ENCODE measurements at regions of chrX and their contacts with region 1.

Region 1: GRCh38 chrX:72245461-72246089 is 6.7 kb upstream of the ERCC6L start:
- H3K4me3 ChIP-seq: no peak overlapping the region
- H3K27ac ChIP-seq: no peak overlapping the region
- H3K4me1 ChIP-seq: peaks cover 5% of the 10 kb centered on the region
- CTCF ChIP-seq: peak; percentile 75

Region 2: GRCh38 chrX:72169008-72169728 is 76.4 kb before region 1 on chrX:
- CTCF ChIA-PET with region 1: no interaction called
- POLR2A ChIA-PET with region 1: no interaction called
- H3K4me3 ChIP-seq: no peak overlapping the region
- H3K27ac ChIP-seq: no peak overlapping the region
- H3K4me1 ChIP-seq: no peaks in the 10 kb centered on the region
- CTCF ChIP-seq: no peak

Region 3: DNA sequence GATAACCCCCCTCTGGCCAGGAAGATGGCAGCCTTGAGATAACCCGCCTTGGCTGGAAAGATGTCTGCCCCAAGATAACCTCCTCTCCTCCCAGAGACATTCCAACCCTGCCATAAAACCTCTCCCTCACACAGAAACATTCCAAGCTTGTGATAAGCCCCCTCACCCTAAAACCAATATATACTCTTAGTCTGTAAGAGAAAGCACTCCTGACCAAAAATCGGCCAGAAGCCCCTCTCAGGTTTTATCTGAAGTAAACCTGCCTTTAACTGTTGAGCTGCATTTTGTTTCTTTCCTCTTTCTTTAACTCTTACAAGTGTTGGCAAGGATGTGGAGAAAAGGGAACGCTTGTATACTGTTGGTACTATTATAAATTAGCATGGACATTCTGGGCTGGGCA is 15.3 kb before region 1 on chrX:
- CTCF ChIA-PET with region 1: interaction called, 24 read pairs
- POLR2A ChIA-PET with region 1: no interaction called
- H3K4me3 ChIP-seq: no peak overlapping the region
- H3K27ac ChIP-seq: no peak overlapping the region
- H3K4me1 ChIP-seq: no peaks in the 10 kb centered on the region
- CTCF ChIP-seq: no peak

Region 4: DNA sequence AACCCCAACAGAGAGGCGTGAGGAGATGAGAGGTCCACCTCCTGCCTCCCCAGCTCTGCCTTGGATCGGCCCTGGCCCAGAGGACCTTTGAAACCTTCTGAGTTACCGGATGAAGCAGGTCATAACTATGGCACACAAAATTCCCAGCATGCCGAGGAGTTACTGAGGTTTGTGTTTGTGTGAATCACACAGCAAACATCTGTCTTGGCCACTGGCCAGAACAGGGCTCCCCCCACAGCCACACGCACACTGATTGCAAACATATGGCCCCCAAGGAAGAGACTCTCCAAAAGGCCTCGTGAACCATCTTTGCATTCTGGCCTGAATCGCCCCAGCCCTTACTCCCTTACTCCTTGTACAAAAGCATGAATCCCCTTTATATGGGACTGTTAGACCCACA is 12.6 kb after region 1 on chrX:
- CTCF ChIA-PET with region 1: interaction called, 27 read pairs
- POLR2A ChIA-PET with region 1: no interaction called
- H3K4me3 ChIP-seq: no peak overlapping the region
- H3K27ac ChIP-seq: no peak overlapping the region
- H3K4me1 ChIP-seq: peaks cover 12% of the 10 kb centered on the region
- CTCF ChIP-seq: no peak

Region 5: DNA sequence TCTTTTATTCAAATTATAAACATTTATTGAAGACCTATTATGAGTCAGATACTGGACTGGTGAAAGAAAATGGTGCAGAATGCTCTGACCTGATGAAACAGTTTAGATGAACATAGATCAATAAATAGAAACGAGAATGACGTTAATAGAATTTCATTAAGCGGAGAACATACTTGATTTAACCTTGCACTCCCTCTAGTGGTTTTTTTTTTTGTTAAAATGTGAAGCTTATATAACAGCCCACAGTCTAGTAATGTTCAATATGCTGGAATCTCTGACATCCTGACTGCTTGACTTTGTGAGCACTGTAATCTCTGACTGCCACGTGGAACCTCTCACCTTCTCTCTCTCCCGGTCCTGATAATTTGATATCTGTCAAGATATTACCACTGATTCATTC is 294.7 kb after region 1 on chrX:
- CTCF ChIA-PET with region 1: interaction called, 87 read pairs
- POLR2A ChIA-PET with region 1: no interaction called
- H3K4me3 ChIP-seq: no peak overlapping the region
- H3K27ac ChIP-seq: no peak overlapping the region
- H3K4me1 ChIP-seq: no peaks in the 10 kb centered on the region
- CTCF ChIP-seq: no peak; the same call in 1 of the 2 replicates

Region 6: DNA sequence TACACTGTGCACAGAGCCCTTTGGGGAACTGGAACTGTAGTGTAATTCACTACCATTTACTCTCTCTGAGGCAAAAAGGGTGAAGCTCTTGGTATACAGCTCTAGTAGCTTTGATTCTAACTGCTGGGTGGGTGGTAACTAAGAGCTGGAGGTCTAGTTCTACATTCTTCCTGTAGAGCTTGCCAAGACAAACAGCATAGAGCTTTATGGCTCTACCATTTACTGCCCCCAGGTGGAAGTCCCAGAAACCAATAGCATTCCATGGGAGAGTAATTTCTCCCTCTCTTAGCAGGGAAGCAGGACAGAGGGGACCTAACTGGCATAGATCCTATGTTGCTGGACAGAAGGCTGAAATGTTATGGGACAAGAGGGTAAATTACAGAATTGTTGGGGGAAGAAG is 300.4 kb after region 1 on chrX:
- CTCF ChIA-PET with region 1: interaction called, 87 read pairs
- POLR2A ChIA-PET with region 1: no interaction called
- H3K4me3 ChIP-seq: no peak overlapping the region
- H3K27ac ChIP-seq: no peak overlapping the region
- H3K4me1 ChIP-seq: peaks cover 8% of the 10 kb centered on the region; the same call in 1 of the 2 replicates
- CTCF ChIP-seq: no peak